ENCODE measurements at regions of chr9 and their contacts with region 1.

Region 1: DNA sequence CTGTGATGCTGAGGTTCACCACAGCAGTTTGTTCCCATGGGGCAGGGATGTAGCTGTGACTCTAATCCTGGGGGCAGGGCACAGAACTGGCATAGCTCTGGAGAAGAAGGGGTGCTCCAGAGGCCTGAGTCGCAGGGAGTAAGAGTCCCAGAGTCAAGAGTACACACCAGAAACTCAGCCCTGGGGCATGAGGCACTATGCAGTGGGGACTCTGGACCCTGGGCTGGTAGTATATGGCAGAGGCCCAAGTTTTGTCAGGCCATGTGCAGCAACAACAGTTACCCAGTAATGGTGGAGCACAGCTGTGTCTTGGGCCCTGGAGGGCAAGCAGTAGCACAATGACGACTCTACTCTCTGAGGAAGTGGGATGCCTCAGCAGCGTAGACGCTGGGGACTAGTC is 42.9 kb downstream of the TMEM38B start:
- ATAC-seq: no peak
- H3K4me3 ChIP-seq: no peak overlapping the region
- H3K27ac ChIP-seq: no peak overlapping the region
- H3K4me1 ChIP-seq: no peaks in the 10 kb centered on the region

Region 2: DNA sequence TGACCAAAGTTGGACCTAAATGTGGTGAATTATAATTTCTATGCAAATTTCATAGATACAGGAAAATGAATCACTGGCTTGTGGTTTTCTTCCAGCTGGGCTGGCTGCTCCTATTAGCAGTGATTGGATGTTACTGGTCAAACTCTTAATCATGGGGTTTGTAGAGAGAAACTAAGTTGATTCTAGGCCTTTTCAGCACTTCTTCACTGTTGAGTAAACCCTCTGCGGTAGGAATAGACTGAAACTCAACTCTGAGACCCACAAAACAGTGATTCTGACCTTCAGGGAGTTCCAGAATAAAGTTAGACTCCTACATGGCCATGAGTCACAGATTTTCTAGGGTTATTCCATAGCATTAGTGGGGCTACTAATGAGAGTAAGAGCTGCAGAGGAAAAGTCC is 227.2 kb before region 1 on chr9:
- in situ Hi-C with region 1: no loop called
- ATAC-seq: peak in 2 of 8 experiments; percentile 91 to 96
- H3K4me3 ChIP-seq: no peak overlapping the region
- H3K27ac ChIP-seq: no peak overlapping the region
- H3K4me1 ChIP-seq: no peaks in the 10 kb centered on the region

Region 3: DNA sequence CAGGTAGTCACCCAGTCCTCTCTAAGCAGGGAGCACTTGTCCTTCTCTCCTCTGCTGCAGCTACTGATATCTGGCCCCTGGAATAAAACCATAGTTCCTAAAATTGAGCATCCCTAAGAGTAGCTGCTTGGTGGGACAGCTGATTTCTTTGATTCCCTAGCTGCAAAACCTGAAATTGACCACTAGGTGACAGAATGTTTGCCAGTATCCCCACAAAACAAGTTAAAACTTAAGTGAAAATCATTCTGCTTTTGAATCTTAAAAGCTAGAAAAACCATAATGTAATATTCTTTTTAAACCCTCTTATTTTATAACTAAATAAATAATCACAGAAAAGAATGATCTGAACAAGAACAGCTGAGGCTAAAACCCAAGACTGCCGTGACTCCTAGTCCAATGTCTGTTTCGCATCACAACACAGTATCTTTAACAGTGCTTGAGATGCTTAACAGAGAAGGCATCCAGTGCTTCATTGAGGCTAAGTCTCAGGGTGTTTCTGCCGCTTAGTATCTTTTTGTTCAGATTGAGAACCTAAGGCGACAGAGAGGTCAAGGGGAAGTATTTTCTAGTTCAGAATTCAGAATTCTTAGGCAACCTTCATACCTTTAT is 99.3 kb before region 1 on chr9:
- in situ Hi-C with region 1: loop called in 1 of 9 experiments (anchors 25 kb)
- ATAC-seq: no peak
- H3K4me3 ChIP-seq: no peak overlapping the region
- H3K27ac ChIP-seq: no peak overlapping the region
- H3K4me1 ChIP-seq: no peaks in the 10 kb centered on the region

Region 4: DNA sequence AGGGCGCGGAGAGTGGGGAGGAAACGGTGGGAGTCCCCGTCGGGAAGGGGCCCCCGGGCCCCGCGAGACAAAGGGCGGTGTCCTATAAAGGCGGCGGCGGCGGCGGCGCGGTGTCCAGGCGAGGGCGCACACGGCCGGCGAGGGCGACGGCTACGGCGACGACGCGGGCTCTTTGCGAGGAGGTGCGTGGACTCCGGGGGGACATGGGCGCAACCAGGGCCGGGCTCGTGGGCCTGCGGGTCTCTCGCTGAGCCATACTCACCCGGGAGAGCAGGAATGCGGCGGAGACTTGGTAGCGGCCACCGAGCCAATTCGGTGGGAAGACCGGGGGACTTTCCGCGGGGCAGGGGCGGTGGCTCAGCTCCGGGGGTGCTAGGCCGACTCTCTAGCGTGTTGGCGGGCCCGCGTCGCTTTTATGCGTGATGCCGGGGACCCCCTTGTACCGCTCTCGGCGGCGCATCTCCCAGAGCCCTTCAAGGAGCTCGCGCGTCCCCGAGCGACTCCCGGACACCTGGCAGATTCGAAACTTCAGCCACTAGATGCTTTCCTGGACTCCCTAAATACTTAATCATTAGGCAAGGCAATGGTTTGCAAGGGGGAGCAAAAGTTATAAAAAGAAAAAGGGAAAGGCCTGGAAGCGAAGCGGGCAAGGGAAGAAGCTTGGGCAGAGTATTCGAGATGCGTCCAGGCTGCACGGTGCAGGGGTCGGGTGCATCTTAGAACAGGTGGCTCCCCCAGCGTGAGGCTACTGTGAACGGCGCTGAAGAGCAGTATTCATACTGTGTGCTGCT is 80.9 kb before region 1 on chr9:
- in situ Hi-C with region 1: no loop called
- ATAC-seq: peak; percentile 48 to 94 (median 91)
- H3K4me3 ChIP-seq: peak overlapping the region; percentile 27 to 52 (median 43)
- H3K27ac ChIP-seq: no peak overlapping the region
- H3K4me1 ChIP-seq: peaks cover 3 to 7% of the 10 kb centered on the region in 2 donors

Measured in motor neuron (in vitro differentiated cells).